AG04450 (cell line): ENCODE measurements at regions of chr21 and their contacts with region 1.

Region 1: DNA sequence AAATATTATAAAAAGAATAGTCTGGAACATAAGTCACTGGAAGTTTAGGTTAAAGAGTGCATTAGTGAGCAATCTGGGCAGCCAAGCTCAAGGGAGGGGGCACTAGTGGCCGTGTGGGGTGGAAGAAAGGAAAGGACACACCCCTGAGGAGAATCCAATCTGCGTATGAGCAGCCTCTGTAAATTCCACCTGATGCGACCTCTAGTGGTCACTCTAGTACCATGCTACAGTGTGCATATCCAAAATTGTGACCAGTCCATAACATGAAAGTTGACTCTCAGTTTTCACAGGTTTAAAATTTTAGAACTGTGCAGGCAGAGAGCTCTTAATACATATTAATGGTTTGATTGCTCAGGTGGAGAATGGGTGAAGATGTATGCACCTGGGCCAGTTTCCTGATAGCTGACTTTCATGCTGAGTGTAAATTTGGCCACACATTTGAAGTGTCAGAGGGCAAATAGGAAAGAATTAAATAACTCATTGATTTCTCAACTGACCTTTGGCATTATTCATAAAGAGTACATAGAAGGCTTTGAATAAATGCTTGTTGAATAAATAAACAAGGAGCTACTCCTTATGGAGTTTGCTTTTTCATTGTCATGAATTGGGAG is 105.9 kb upstream of the C21orf91 start:
- DNase-seq: peak; percentile 6
- H3K4me3 ChIP-seq: no peak overlapping the region
- H3K27ac ChIP-seq: no peak overlapping the region
- H3K27me3 ChIP-seq: no peaks in the 10 kb centered on the region
- CTCF ChIP-seq: peak; percentile 93

Region 2: GRCh38 chr21:17667256-17667655 is 257.8 kb before region 1 on chr21:
- CTCF ChIA-PET with region 1: interaction called, 35 read pairs
- POLR2A ChIA-PET with region 1: no interaction called
- DNase-seq: no peak
- H3K4me3 ChIP-seq: no peak overlapping the region
- H3K27ac ChIP-seq: no peak overlapping the region
- H3K27me3 ChIP-seq: no peaks in the 10 kb centered on the region
- CTCF ChIP-seq: no peak

Region 3: GRCh38 chr21:17679002-17679600 is 246.0 kb before region 1 on chr21:
- CTCF ChIA-PET with region 1: interaction called, 118 read pairs
- POLR2A ChIA-PET with region 1: no interaction called
- DNase-seq: peak; percentile 37
- H3K4me3 ChIP-seq: no peak overlapping the region
- H3K27ac ChIP-seq: no peak overlapping the region
- H3K27me3 ChIP-seq: no peaks in the 10 kb centered on the region
- CTCF ChIP-seq: peak; percentile 83

Region 4: GRCh38 chr21:17805966-17806365 is 119.1 kb before region 1 on chr21:
- CTCF ChIA-PET with region 1: interaction called, 10 read pairs
- POLR2A ChIA-PET with region 1: no interaction called
- DNase-seq: no peak
- H3K4me3 ChIP-seq: no peak overlapping the region
- H3K27ac ChIP-seq: no peak overlapping the region
- H3K27me3 ChIP-seq: no peaks in the 10 kb centered on the region
- CTCF ChIP-seq: no peak

Region 5: GRCh38 chr21:17848228-17848627 is 76.9 kb before region 1 on chr21:
- CTCF ChIA-PET with region 1: interaction called, 21 read pairs
- POLR2A ChIA-PET with region 1: no interaction called
- DNase-seq: peak; percentile 90
- H3K4me3 ChIP-seq: no peak overlapping the region
- H3K27ac ChIP-seq: peak overlapping the region; percentile 89
- H3K27me3 ChIP-seq: no peaks in the 10 kb centered on the region
- CTCF ChIP-seq: no peak

Region 6: GRCh38 chr21:17911628-17912027 is 13.5 kb before region 1 on chr21:
- CTCF ChIA-PET with region 1: interaction called, 60 read pairs
- POLR2A ChIA-PET with region 1: no interaction called
- DNase-seq: no peak
- H3K4me3 ChIP-seq: no peak overlapping the region
- H3K27ac ChIP-seq: no peak overlapping the region
- H3K27me3 ChIP-seq: no peaks in the 10 kb centered on the region
- CTCF ChIP-seq: no peak

Region 7: DNA sequence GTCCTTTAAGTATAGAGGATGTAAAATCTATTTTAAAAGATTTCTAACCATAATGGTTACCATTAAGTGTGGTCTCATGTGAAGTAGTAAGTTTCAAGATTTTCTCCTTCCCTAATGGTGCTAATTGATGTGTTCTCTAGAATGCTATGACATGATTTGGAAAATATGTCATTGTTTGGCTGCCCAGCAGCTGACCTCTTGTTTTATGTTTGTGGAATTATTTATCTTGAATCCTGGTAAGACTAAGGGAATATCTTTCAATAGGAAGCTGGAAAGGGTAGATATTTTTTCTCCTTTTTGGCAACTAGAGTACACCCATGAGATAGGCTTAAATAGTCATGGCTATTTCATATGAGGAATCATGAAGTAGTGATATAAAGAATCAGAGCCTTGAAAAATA is 179.7 kb after region 1 on chr21:
- CTCF ChIA-PET with region 1: no interaction called
- POLR2A ChIA-PET with region 1: no interaction called
- DNase-seq: no peak
- H3K4me3 ChIP-seq: no peak overlapping the region
- H3K27ac ChIP-seq: no peak overlapping the region
- H3K27me3 ChIP-seq: no peaks in the 10 kb centered on the region
- CTCF ChIP-seq: no peak